ENCODE measurements at regions of chr1 and their contacts with region 1.

Region 1: DNA sequence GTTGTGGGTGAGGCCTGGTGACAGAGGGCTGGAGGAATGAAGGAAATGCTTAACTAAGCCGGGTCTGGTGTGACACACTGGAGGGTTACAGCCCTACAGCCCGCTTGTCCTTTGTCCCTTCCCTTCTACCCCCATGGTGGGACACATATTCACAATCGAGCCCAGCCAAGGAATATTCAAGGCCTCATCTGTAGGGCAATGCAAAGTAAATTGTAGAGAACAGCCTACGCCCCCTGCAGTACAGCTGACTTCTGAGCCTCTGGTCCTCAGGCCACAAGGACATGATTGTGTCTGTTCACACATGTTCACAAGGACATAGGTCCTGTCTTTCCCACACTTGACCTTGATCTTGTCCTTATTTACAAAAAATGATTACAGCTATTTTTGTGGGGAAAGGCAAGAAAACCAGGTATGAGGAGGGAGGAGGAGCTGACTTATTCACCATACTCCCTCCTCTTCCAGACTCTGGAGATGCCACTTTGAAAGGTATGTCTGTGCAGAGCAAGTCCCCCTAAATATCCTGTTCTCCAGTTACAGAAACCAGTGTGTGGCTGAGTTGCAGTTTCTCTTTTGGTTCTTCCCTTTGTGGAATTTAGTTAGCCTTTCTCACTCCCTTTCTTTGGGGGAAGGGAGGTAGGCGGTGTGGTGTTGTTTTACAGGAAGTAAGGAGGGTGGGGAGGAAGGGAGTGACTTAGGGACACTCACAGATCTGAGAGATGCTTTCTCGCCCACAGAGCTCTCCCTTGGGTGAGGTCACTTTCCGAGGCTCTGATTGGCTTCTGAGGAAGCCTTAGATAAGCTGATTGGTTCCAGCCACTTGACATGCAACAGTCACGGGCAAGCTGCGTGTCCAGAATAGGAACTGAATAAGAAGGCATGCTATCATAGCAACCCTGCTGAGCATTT is 14.6 kb downstream of the POLR3GL start:
- DNase-seq: peak in 33 of 35 experiments; percentile 53 to 91 (median 75)
- ATAC-seq: peak; percentile 74 to 81 (median 76)
- H3K4me3 ChIP-seq: peak overlapping the region; percentile 20 to 33
- H3K4me3 Mint-ChIP-seq: no peak overlapping the region
- H3K27ac ChIP-seq: peak overlapping the region; percentile 94
- H3K27ac Mint-ChIP-seq: no peak overlapping the region
- H3K4me1 ChIP-seq: peaks cover 60 to 68% of the 10 kb centered on the region in 2 experiments
- H3K4me1 Mint-ChIP-seq: peaks cover 1 to 42% (median 10%) of the 10 kb centered on the region in 3 donors
- H3K27me3 ChIP-seq: no peaks in the 10 kb centered on the region
- H3K27me3 Mint-ChIP-seq: no peaks in the 10 kb centered on the region

Region 2: DNA sequence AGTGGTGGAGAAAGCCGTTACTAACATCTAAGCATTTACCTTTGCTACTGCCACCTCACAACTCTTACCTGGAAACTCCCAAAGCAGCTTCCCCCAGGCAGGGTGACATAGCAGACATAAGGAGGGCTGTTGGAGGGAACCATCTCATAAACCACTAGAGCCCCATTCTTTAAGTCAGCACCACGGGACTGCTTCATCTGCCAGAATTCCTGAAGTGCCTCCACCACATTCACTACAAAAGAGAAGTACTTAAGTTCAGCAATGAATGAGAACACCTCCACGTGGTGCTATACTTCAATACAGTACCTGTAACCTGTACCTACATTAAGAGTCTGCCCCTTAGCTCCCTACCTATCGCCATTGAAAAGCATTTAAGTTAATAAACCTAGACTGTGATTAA is 31.6 kb before region 1 on chr1:
- CTCF ChIA-PET with region 1: no interaction called
- POLR2A ChIA-PET with region 1: no interaction called
- DNase-seq: no peak
- ATAC-seq: no peak
- H3K4me3 ChIP-seq: no peak overlapping the region
- H3K4me3 Mint-ChIP-seq: no peak overlapping the region
- H3K27ac ChIP-seq: no peak overlapping the region
- H3K27ac Mint-ChIP-seq: no peak overlapping the region
- H3K4me1 ChIP-seq: peaks cover 0 to 16% of the 10 kb centered on the region in 2 experiments
- H3K4me1 Mint-ChIP-seq: peaks cover 46 to 56% (median 50%) of the 10 kb centered on the region in 3 donors
- H3K27me3 ChIP-seq: no peaks in the 10 kb centered on the region
- H3K27me3 Mint-ChIP-seq: no peaks in the 10 kb centered on the region

Region 3: GRCh38 chr1:145957443-145958319 is 21.4 kb before region 1 on chr1 and contains the start of gene LIX1L:
- CTCF ChIA-PET with region 1: interaction called in 1 of 2 experiments, 19 read pairs
- POLR2A ChIA-PET with region 1: interaction called, 4 to 11 read pairs
- DNase-seq: peak; percentile 86 to 97 (median 94)
- ATAC-seq: peak; percentile 88 to 90 (median 89)
- H3K4me3 ChIP-seq: peak within 1 kb of the TSS; percentile 80 to 84
- H3K4me3 Mint-ChIP-seq: peak within 1 kb of the TSS; percentile 89 to 92 (median 90)
- H3K27ac ChIP-seq: peak within 1 kb of the TSS; percentile 84
- H3K27ac Mint-ChIP-seq: peak within 1 kb of the TSS; percentile 89 to 95
- H3K4me1 ChIP-seq: peaks cover 43 to 57% of the 10 kb centered on the region in 2 experiments
- H3K4me1 Mint-ChIP-seq: peaks cover 66 to 82% (median 71%) of the 10 kb centered on the region in 3 donors
- H3K27me3 ChIP-seq: no peaks in the 10 kb centered on the region
- H3K27me3 Mint-ChIP-seq: no peaks in the 10 kb centered on the region
- total RNA-seq, gene LIX1L: 43.4 to 74.4 (median 64.2) TPM

Region 4: GRCh38 chr1:145996433-145997015 is 17.4 kb after region 1 on chr1 and contains the start of gene TXNIP:
- CTCF ChIA-PET with region 1: interaction called, 6 to 93 read pairs
- POLR2A ChIA-PET with region 1: interaction called, 12 to 15 read pairs
- DNase-seq: peak; percentile 77 to 99 (median 94)
- ATAC-seq: peak; percentile 82 to 86 (median 82)
- H3K4me3 ChIP-seq: peak within 1 kb of the TSS; percentile 83 to 100
- H3K4me3 Mint-ChIP-seq: peak within 1 kb of the TSS; percentile 96 to 98 (median 98)
- H3K27ac ChIP-seq: peak within 1 kb of the TSS; percentile 82
- H3K27ac Mint-ChIP-seq: peak within 1 kb of the TSS; percentile 98 to 99
- H3K4me1 ChIP-seq: peaks cover 47 to 50% of the 10 kb centered on the region in 2 experiments
- H3K4me1 Mint-ChIP-seq: peaks cover 65 to 71% (median 69%) of the 10 kb centered on the region in 3 donors
- H3K27me3 ChIP-seq: no peaks in the 10 kb centered on the region
- H3K27me3 Mint-ChIP-seq: no peaks in the 10 kb centered on the region
- total RNA-seq, gene TXNIP: 721 to 2,117 (median 773) TPM

Region 5: DNA sequence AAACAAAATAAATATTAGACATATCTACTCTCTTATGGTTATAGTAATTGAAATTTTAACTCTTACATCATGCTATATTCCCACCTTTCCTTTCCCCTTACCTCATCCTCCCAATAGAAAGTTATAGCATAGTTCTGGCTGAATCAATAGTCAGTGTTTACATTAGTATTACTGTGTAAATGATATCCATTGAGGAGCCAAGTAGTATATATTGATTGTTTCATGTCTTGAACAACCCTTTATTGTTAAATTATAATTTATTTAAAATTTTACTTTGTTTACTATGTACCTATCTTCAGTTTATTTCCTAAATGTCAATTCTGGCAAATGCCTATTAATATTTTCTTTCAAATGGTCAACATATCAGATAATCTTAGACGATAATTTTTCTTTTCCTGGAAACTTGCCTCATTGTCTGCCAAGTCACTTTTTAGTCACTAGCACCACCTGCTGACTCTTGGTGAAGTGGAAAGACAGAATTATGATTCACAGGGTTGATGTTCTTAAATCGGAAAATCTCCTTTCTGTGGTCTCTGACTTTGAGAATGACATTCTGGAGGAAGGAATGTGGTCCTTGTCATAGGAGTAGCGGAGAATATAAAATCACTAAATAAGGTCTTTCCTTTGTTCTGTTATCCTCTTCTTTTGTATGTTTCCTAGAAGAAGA is 33.8 kb after region 1 on chr1:
- CTCF ChIA-PET with region 1: interaction called, 46 to 148 read pairs
- POLR2A ChIA-PET with region 1: interaction called, 3 to 7 read pairs
- DNase-seq: peak in 29 of 35 experiments; percentile 29 to 86 (median 55)
- ATAC-seq: peak in 3 of 4 experiments; percentile 59 to 79 (median 73)
- H3K4me3 ChIP-seq: no peak overlapping the region
- H3K4me3 Mint-ChIP-seq: no peak overlapping the region
- H3K27ac ChIP-seq: no peak overlapping the region
- H3K27ac Mint-ChIP-seq: no peak overlapping the region
- H3K4me1 ChIP-seq: peaks cover 0 to 1% of the 10 kb centered on the region in 2 experiments
- H3K4me1 Mint-ChIP-seq: peaks cover 6 to 9% (median 7%) of the 10 kb centered on the region in 3 donors
- H3K27me3 ChIP-seq: peaks cover 0 to 4% of the 10 kb centered on the region in 2 experiments
- H3K27me3 Mint-ChIP-seq: peaks cover 3 to 8% of the 10 kb centered on the region in 2 donors

Region 6: DNA sequence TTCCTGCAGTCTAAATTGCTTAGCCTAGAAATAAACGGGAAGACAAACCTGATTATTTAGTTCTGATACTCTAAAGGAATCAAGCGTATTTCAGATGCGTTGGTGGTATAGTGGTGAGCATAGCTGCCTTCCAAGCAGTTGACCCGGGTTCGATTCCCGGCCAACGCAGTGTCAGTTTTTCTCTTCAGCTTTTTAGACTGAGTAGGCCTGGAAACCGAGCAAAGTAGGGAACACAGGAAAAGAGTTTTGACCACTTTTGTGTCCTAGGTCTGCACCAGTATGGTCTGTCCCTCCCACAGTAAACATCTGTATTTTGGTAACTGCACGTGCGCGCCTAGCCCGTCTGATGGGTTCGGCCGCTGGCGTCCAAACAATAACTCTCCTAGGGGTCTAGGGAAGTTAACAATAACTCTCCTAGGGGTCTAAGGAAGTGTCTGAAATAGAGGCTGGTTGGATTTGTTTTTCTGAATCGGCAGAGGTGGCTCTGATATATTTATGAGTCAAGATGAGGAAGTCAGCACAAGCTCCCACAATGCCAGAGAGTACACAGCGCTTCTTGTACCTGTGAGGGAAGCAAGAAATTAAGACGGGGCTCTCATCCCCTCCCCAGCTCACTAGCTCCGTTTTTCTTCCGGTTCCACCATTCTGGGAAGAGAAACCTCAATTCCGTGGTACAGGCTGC is 58.0 kb after region 1 on chr1:
- CTCF ChIA-PET with region 1: interaction called in 1 of 2 experiments, 6 read pairs
- POLR2A ChIA-PET with region 1: interaction called in 1 of 2 experiments, 11 read pairs
- DNase-seq: peak; percentile 45 to 83 (median 65)
- ATAC-seq: peak; percentile 61 to 75 (median 74)
- H3K4me3 ChIP-seq: peak overlapping the region; percentile 80 to 91
- H3K4me3 Mint-ChIP-seq: peak overlapping the region; percentile 96
- H3K27ac ChIP-seq: peak overlapping the region; percentile 68
- H3K27ac Mint-ChIP-seq: peak overlapping the region; percentile 97
- H3K4me1 ChIP-seq: peaks cover 7 to 32% of the 10 kb centered on the region in 2 experiments
- H3K4me1 Mint-ChIP-seq: peaks cover 32 to 45% (median 39%) of the 10 kb centered on the region in 3 donors
- H3K27me3 ChIP-seq: no peaks in the 10 kb centered on the region
- H3K27me3 Mint-ChIP-seq: peaks cover 0 to 6% of the 10 kb centered on the region in 2 donors

Measured in T-cell (primary cell).